OCI-LY7 (cell line): ENCODE measurements at regions of chr15 and their contacts with region 1.

Region 1: GRCh38 chr15:94324117-94324826 is 92.9 kb downstream of the MCTP2 start:
- DNase-seq: peak; percentile 86
- H3K4me3 ChIP-seq: no peak overlapping the region
- H3K27ac ChIP-seq: peak overlapping the region; percentile 12
- H3K4me1 ChIP-seq: peaks cover 24% of the 10 kb centered on the region
- CTCF ChIP-seq: peak; percentile 98

Region 2: DNA sequence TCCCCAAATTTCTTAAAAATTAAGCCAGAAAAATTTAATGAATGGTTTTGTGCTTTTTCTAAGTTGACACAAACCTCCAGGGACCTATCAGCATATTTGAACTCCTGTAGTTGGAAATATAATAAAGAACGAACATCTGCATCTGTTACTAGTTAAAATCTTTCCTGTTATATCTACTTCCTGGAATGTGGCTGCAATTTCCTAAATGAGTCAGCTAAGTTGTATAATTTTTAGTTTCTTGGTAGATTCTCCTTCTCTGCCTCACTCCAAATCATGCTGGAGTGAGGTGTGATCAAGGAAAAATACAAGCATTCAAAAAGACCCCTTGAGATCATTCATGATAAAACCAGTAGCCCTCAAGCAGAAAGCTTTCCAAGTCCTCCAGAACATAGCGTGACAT is 199.1 kb before region 1 on chr15:
- CTCF ChIA-PET with region 1: no interaction called
- POLR2A ChIA-PET with region 1: no interaction called
- intact Hi-C with region 1: no loop called
- DNase-seq: no peak
- H3K4me3 ChIP-seq: no peak overlapping the region
- H3K27ac ChIP-seq: no peak overlapping the region
- H3K4me1 ChIP-seq: no peaks in the 10 kb centered on the region
- CTCF ChIP-seq: no peak

Region 3: GRCh38 chr15:94163999-94164807 is 160.1 kb before region 1 on chr15:
- CTCF ChIA-PET with region 1: interaction called, 32 read pairs
- POLR2A ChIA-PET with region 1: interaction called, 8 read pairs
- intact Hi-C with region 1: loop called (anchors 1 kb)
- DNase-seq: peak; percentile 81
- H3K4me3 ChIP-seq: no peak overlapping the region
- H3K27ac ChIP-seq: no peak overlapping the region
- H3K4me1 ChIP-seq: peaks cover 12% of the 10 kb centered on the region
- CTCF ChIP-seq: peak; percentile 99

Region 4: DNA sequence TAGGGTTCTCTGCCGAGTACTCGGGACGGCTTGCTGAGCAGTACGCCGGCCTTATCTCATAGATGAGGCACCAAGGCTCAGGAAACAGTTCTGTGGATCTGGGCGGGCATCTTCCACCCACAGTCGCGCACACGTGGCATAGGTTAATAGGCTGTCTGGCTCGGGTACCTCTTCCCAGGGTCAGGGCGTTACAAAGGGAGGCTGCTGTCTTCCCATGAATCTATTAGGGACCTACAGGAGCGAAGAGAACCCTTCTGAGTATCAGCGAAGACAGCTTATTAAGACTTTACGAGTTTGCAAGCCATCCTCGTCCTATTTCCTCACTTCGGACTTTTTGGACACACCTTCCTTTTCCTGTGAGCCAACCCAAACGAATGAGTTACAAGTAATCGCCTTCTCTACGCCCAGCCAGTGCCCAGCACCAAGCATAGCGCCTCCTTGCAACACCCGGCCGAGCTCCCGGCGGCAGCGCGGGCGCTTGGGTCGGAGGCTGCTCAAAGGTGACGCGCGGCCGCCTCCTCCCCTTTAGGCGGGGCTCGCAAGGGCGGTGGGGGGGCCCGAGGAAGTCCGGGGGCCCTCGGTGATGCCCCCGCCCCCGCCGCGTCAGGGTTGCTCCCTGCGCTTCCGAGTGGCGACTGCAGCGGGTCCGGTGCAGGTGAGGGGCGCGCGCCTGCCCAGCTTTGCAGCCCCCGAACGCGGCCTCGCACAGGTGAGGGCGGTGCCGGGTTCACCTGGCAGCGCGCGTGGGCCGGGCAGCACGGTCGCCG is 93.1 kb before region 1 on chr15 and contains the start of gene MCTP2:
- CTCF ChIA-PET with region 1: interaction called, 5 read pairs
- POLR2A ChIA-PET with region 1: interaction called, 20 read pairs
- intact Hi-C with region 1: loop called (anchors 1 kb)
- DNase-seq: peak; percentile 95
- H3K4me3 ChIP-seq: peak within 1 kb of the TSS; percentile 86
- H3K27ac ChIP-seq: peak within 1 kb of the TSS; percentile 81
- H3K4me1 ChIP-seq: peaks cover 60% of the 10 kb centered on the region
- CTCF ChIP-seq: peak; percentile 60
- total RNA-seq, gene MCTP2: 73.2 and 75.0 TPM in 2 replicates

Region 5: GRCh38 chr15:94258246-94258645 is 66.0 kb before region 1 on chr15:
- CTCF ChIA-PET with region 1: no interaction called
- POLR2A ChIA-PET with region 1: interaction called, 3 read pairs
- intact Hi-C with region 1: loop called (anchors 2 kb)
- DNase-seq: peak; percentile 91
- H3K4me3 ChIP-seq: peak overlapping the region; percentile 43
- H3K27ac ChIP-seq: peak overlapping the region; percentile 97
- H3K4me1 ChIP-seq: peaks cover 98% of the 10 kb centered on the region
- CTCF ChIP-seq: no peak

Region 6: GRCh38 chr15:94306700-94307650 is 17.3 kb before region 1 on chr15:
- CTCF ChIA-PET with region 1: interaction called, 4 read pairs
- POLR2A ChIA-PET with region 1: interaction called, 12 read pairs
- intact Hi-C with region 1: no loop called
- DNase-seq: peak; percentile 91
- H3K4me3 ChIP-seq: peak overlapping the region; percentile 28
- H3K27ac ChIP-seq: peak overlapping the region; percentile 86
- H3K4me1 ChIP-seq: peaks cover 62% of the 10 kb centered on the region
- CTCF ChIP-seq: no peak; the same call in 1 of the 2 replicates

Region 7: DNA sequence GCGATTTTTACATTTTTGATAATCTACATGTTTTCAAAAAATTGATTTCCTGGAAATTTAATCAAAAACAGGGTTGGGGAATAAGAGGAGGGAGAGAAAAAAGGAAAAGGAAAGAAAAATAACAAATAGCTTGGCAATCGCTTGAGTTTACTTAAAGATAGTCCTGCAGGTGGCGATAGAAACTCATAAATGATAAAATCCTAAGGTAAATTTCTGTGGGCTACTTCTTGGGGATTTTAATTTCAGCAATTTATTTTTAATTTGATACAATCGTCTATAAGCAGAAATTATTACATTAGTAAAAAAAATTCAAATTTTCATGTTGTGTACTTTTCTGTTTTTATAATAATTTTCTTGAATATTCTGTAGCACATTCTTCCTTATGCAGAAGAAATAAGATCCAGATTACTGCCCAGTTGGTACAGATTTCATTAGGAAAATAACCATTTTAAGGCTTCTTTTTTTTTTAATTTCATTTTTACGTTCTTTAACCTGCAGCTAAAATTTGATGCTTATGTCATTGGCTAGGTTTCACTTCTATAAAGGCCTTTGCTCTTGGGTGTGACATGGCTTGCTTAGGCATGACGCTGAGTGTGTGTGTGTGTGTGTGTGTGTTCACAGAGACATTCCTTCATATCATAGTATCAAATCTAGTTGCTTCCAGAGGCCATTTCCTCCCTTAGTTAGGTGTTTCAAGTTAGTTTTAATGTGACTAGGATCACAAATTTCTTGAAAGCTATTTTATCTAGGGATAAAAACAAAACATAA is 88.9 kb after region 1 on chr15:
- CTCF ChIA-PET with region 1: no interaction called
- POLR2A ChIA-PET with region 1: interaction called, 3 read pairs
- intact Hi-C with region 1: loop called (anchors 1 kb)
- DNase-seq: peak; percentile 51
- H3K4me3 ChIP-seq: no peak overlapping the region
- H3K27ac ChIP-seq: no peak overlapping the region
- H3K4me1 ChIP-seq: peaks cover 29% of the 10 kb centered on the region
- CTCF ChIP-seq: peak; percentile 96

Region 8: GRCh38 chr15:94478763-94479162 is 154.5 kb after region 1 on chr15:
- CTCF ChIA-PET with region 1: no interaction called
- POLR2A ChIA-PET with region 1: interaction called, 3 read pairs
- intact Hi-C with region 1: loop called (anchors 5 kb)
- DNase-seq: peak; percentile 93
- H3K4me3 ChIP-seq: peak overlapping the region; percentile 27
- H3K27ac ChIP-seq: peak overlapping the region; percentile 67
- H3K4me1 ChIP-seq: peaks cover 32% of the 10 kb centered on the region
- CTCF ChIP-seq: peak; percentile 66

Region 9: GRCh38 chr15:94522125-94522524 is 197.9 kb after region 1 on chr15:
- CTCF ChIA-PET with region 1: no interaction called
- POLR2A ChIA-PET with region 1: no interaction called
- intact Hi-C with region 1: no loop called
- DNase-seq: no peak
- H3K4me3 ChIP-seq: no peak overlapping the region
- H3K27ac ChIP-seq: no peak overlapping the region
- H3K4me1 ChIP-seq: no peaks in the 10 kb centered on the region
- CTCF ChIP-seq: no peak